Endothelial cell of umbilical vein (primary cell): ENCODE measurements at regions of chr12 and their contacts with region 1.

Region 1: GRCh38 chr12:122097927-122098756 is 19.6 kb downstream of the MLXIP start:
- DNase-seq: peak; percentile 67
- H3K4me3 ChIP-seq: no peak overlapping the region
- H3K27ac ChIP-seq: peak overlapping the region; percentile 31
- H3K4me1 ChIP-seq: peaks cover 31% of the 10 kb centered on the region
- H3K27me3 ChIP-seq: no peaks in the 10 kb centered on the region
- CTCF ChIP-seq: no peak
- POLR2A ChIP-seq: no peak

Region 2: DNA sequence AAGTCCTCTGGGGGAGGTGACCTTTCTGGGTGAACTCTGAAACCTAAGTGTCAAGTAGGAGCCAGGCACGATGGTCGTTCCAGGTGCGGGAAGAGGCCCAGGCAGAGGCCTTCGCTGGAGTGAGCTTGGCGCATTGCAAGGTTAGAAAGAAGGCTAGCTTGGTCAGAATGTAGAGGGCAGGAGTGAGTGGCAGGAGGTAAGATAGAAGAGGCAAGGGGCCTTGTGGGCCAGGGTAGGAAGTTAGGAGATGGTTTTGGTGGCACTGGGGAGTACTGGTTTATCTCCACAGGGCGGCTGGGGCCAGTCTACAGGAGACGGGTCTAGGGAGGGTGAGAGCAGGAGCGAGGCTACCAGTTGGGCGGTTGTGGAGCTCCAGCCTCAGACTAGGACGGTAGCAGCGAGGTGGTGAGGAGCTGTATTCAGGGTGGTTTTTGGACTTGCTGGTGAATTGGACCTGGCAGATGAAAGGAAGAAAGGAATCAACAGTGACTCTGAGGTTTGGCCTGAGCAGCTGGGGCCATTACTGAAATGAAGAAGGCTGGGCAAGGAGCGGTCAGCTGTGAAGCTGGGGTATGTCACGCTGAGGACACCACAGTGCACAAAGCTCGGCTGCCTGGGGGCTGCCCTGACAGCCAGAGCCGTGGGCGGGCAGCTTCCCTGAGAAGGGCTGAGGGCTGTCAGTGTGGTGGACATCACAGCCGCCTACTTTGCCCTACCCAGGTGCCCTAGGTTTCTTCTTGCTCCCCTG is 10.5 kb before region 1 on chr12:
- CTCF ChIA-PET with region 1: interaction called, 18 read pairs
- POLR2A ChIA-PET with region 1: no interaction called
- dilution Hi-C with region 1: no loop called
- intact Hi-C with region 1: no loop called
- DNase-seq: no peak
- H3K4me3 ChIP-seq: no peak overlapping the region
- H3K27ac ChIP-seq: no peak overlapping the region
- H3K4me1 ChIP-seq: peaks cover 15% of the 10 kb centered on the region
- H3K27me3 ChIP-seq: no peaks in the 10 kb centered on the region
- CTCF ChIP-seq: no peak
- POLR2A ChIP-seq: no peak